ENCODE measurements at regions of chr2 and their contacts with region 1.

Region 1: GRCh38 chr2:68901199-68901960 is 30.2 kb upstream of the BMP10 start:
- DNase-seq: no peak
- ATAC-seq: no peak
- H3K4me3 Mint-ChIP-seq: no peak overlapping the region
- H3K27ac Mint-ChIP-seq: no peak overlapping the region
- H3K4me1 Mint-ChIP-seq: peaks cover 6% of the 10 kb centered on the region
- H3K27me3 Mint-ChIP-seq: peaks cover 1% of the 10 kb centered on the region
- CTCF ChIP-seq: no peak

Region 2: GRCh38 chr2:68870215-68870614 is 31.2 kb before region 1 on chr2:
- CTCF ChIA-PET with region 1: no interaction called
- POLR2A ChIA-PET with region 1: no interaction called
- intact Hi-C with region 1: loop called (anchors 1 kb)
- DNase-seq: no peak
- ATAC-seq: no peak
- H3K4me3 Mint-ChIP-seq: no peak overlapping the region
- H3K27ac Mint-ChIP-seq: no peak overlapping the region
- H3K4me1 Mint-ChIP-seq: no peaks in the 10 kb centered on the region
- H3K27me3 Mint-ChIP-seq: peaks cover 7% of the 10 kb centered on the region
- CTCF ChIP-seq: no peak

Measured in activated B cell treated with CpG ODN at 0.5 μM for 24 hours (primary cell).